ENCODE measurements at regions of chr16 and their contacts with region 1.

Region 1: GRCh38 chr16:68040507-68041288 is 17.6 kb downstream of the DUS2 start:
- DNase-seq: peak; percentile 94
- H3K4me3 Mint-ChIP-seq: no peak overlapping the region
- H3K27ac Mint-ChIP-seq: peak overlapping the region; percentile 65
- H3K4me1 Mint-ChIP-seq: peaks cover 6% of the 10 kb centered on the region
- H3K27me3 Mint-ChIP-seq: no peaks in the 10 kb centered on the region

Region 2: DNA sequence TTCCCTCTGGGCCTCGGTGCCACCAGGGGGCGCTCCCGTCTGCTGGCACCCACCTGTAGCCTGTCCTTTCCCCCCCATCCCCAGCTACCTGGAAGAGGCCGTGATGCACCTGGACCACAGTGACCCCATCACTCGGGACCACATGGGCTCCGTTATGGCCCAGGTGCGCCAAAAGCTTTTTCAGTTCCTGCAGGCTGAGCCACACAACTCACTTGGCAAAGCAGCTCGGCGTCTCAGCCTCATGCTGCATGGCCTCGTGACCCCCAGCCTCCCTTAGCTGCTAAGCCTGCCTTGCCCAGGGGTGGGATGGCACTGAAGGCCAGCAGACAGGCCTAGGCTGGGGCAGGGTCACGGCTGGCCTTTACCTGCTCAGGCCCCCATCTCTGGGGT is 156.8 kb before region 1 on chr16:
- CTCF ChIA-PET with region 1: interaction called, 27 read pairs
- POLR2A ChIA-PET with region 1: no interaction called
- intact Hi-C with region 1: loop called (anchors 5 kb)
- DNase-seq: peak; percentile 73
- H3K4me3 Mint-ChIP-seq: no peak overlapping the region
- H3K27ac Mint-ChIP-seq: no peak overlapping the region
- H3K4me1 Mint-ChIP-seq: no peaks in the 10 kb centered on the region
- H3K27me3 Mint-ChIP-seq: no peaks in the 10 kb centered on the region

Region 3: DNA sequence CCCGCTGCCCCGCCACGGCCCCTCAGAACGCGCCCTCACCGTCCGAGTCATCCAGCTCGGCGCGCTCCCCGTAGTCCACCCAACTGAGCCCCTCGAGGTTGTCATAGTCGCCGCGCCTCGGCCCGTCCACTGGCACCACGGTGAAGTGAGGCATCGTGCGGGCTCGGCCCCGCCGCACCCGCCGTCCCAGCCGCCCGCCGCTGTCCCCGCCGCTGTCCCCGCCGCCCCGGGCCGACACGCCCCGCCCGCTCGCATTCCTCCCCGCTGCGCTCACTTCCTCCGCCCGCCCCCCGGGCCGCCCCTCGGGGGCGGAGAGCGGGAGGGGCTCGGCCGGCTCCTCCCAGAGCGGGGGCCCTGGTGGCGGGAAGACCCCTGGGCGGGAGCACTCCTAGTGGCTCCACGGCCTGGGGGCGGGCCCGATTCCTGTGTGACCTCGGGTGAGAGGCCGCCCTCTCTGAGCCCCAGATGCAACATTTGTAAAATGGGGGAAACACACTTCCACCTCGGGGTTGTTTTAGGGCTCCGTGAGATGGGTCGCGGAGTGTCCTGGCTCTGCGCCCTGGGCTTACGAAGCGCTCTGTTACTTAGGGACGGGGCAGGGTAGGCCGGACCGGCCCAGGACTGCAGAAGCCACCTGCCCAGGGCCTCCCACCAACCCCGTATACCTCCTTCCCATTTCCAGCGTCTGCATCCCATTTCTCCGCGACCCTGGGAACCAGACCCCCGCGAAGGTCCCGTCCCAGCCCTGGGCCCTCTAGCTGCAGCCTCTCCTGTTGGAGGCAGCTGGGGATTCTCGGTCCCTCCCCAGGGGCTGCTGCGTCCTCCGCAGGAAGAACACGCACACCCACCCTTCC is 72.1 kb before region 1 on chr16 and contains the start of gene SLC12A4:
- CTCF ChIA-PET with region 1: interaction called, 4 read pairs
- POLR2A ChIA-PET with region 1: no interaction called
- intact Hi-C with region 1: loop called (anchors 2 kb)
- DNase-seq: peak; percentile 94
- H3K4me3 Mint-ChIP-seq: peak within 1 kb of the TSS; percentile 99
- H3K27ac Mint-ChIP-seq: peak within 1 kb of the TSS; percentile 78
- H3K4me1 Mint-ChIP-seq: peaks cover 18% of the 10 kb centered on the region
- H3K27me3 Mint-ChIP-seq: no peaks in the 10 kb centered on the region
- total RNA-seq, gene SLC12A4: 27.1 to 29.9 TPM

Region 4: GRCh38 chr16:67999985-68000384 is 40.7 kb before region 1 on chr16:
- CTCF ChIA-PET with region 1: interaction called, 19 read pairs
- POLR2A ChIA-PET with region 1: interaction called, 3 read pairs
- intact Hi-C with region 1: no loop called
- DNase-seq: no peak
- H3K4me3 Mint-ChIP-seq: peak overlapping the region; percentile 72
- H3K27ac Mint-ChIP-seq: peak overlapping the region; percentile 88
- H3K4me1 Mint-ChIP-seq: peaks cover 52% of the 10 kb centered on the region
- H3K27me3 Mint-ChIP-seq: no peaks in the 10 kb centered on the region

Region 5: GRCh38 chr16:68022704-68023522 is 17.8 kb before region 1 on chr16 and contains the starts of genes DDX28 and DUS2:
- CTCF ChIA-PET with region 1: interaction called, 27 read pairs
- POLR2A ChIA-PET with region 1: no interaction called
- intact Hi-C with region 1: no loop called
- DNase-seq: peak; percentile 97
- H3K4me3 Mint-ChIP-seq: peak within 1 kb of the TSS; percentile 95
- H3K27ac Mint-ChIP-seq: peak within 1 kb of the TSS; percentile 94
- H3K4me1 Mint-ChIP-seq: peaks cover 26% of the 10 kb centered on the region
- H3K27me3 Mint-ChIP-seq: no peaks in the 10 kb centered on the region
- total RNA-seq, gene DDX28: 12.8 to 14.5 TPM
- total RNA-seq, gene DUS2: 29.2 to 29.4 TPM

Region 6: DNA sequence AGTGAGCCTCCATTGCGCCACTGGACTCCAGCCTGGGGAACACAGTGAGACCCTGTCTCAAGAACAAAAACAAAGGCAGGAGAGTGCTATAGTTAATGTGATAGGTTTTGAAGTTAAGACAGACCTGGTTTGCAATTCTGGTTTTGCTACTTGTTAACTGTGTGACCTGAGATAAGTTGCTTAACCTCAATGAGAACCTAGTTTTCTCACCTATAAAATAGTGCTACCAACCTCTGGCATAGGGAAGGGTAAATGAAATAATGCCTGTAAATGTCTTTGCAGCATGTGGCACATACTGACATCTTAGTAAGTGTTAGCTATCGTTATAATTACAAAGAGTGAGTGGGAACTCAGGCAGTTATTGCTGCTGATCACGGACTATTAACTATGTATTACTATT is 14.7 kb after region 1 on chr16:
- CTCF ChIA-PET with region 1: interaction called, 14 read pairs
- POLR2A ChIA-PET with region 1: no interaction called
- intact Hi-C with region 1: no loop called
- DNase-seq: no peak
- H3K4me3 Mint-ChIP-seq: no peak overlapping the region
- H3K27ac Mint-ChIP-seq: no peak overlapping the region
- H3K4me1 Mint-ChIP-seq: peaks cover 18% of the 10 kb centered on the region
- H3K27me3 Mint-ChIP-seq: no peaks in the 10 kb centered on the region

Region 7: DNA sequence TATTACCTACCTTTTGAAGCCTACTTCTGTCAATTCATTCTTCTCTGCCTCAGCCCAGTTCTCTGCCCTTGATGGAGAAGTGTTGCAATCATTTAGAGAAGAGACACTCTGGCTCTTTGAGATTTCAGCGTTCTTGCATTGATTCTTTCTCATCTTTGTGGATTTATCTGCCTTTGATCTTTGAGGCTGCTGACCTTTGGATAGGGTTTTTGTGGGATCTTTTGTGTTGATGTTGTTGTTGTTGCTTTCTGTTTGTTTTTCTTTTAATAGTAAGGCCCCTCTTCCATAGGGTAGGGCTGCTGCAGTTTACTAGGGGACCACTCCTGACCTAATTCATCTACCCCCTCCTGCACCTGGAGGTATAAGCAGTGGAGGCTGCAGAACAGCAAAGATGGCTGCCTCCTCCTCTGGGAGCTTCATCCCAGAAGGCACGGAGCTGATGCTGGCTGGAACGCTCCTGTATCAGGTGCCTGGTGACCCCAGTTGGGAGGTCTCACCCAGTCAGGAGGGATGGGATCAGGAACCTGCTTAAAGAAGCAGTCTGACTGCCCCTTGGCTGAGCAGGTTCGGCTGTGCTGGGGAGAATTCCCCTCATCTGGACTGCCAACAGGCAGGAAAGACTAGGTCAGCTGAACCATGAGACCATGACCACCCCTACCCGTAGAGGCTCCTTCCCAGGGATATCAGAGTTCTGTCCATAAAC is 72.5 kb after region 1 on chr16:
- CTCF ChIA-PET with region 1: no interaction called
- POLR2A ChIA-PET with region 1: no interaction called
- intact Hi-C with region 1: no loop called
- DNase-seq: no peak
- H3K4me3 Mint-ChIP-seq: no peak overlapping the region
- H3K27ac Mint-ChIP-seq: no peak overlapping the region
- H3K4me1 Mint-ChIP-seq: peaks cover 84% of the 10 kb centered on the region
- H3K27me3 Mint-ChIP-seq: no peaks in the 10 kb centered on the region

Measured in activated CD4-positive, alpha-beta memory T cell treated with anti-CD3 and anti-CD28 coated beads for 36 hours (primary cell).